CD8-positive, alpha-beta memory T cell (primary cell): ENCODE measurements at regions of chr17 and their contacts with region 1.

Region 1: GRCh38 chr17:4733073-4733531 is 1.9 kb downstream of the MED11 start:
- DNase-seq: no peak
- H3K4me3 ChIP-seq: no peak overlapping the region
- H3K4me3 Mint-ChIP-seq: peak overlapping the region in 4 of 7 donors; percentile 47 to 99 (median 80)
- H3K27ac ChIP-seq: no peak overlapping the region
- H3K27ac Mint-ChIP-seq: peak overlapping the region in 2 of 8 donors; percentile 68 to 71
- H3K4me1 ChIP-seq: peaks cover 1% of the 10 kb centered on the region
- H3K4me1 Mint-ChIP-seq: peaks cover 22 to 31% (median 27%) of the 10 kb centered on the region in 3 donors
- H3K27me3 ChIP-seq: no peaks in the 10 kb centered on the region
- H3K27me3 Mint-ChIP-seq: peaks cover 0 to 1% of the 10 kb centered on the region in 2 donors

Region 2: DNA sequence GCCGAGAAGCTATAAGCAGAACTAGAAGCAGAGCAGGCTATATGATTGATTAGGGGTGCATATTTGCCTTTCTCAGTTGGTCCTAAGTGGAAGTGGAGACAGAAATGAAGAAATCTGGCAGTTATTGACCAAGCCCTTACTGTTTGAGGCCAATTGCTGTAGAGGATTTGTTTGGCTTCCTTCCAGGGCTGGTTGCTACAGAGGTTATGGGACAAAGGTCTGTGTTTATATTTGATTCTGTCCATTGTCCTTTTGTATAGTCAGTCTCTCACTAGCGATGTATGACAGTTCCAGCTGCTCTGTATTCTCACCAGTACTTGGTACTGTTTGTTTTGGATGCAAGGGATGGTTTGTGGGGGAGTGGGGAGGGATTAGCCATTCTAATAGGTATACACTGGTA is 84.4 kb before region 1 on chr17:
- CTCF ChIA-PET with region 1: no interaction called
- POLR2A ChIA-PET with region 1: no interaction called
- DNase-seq: no peak
- H3K4me3 ChIP-seq: no peak overlapping the region
- H3K4me3 Mint-ChIP-seq: no peak overlapping the region
- H3K27ac ChIP-seq: no peak overlapping the region
- H3K27ac Mint-ChIP-seq: no peak overlapping the region
- H3K4me1 ChIP-seq: no peaks in the 10 kb centered on the region
- H3K4me1 Mint-ChIP-seq: no peaks in the 10 kb centered on the region
- H3K27me3 ChIP-seq: peaks cover 5% of the 10 kb centered on the region
- H3K27me3 Mint-ChIP-seq: peaks cover 31 to 52% of the 10 kb centered on the region in 2 donors

Region 3: GRCh38 chr17:4782652-4783051 is 49.5 kb after region 1 on chr17:
- CTCF ChIA-PET with region 1: no interaction called
- POLR2A ChIA-PET with region 1: interaction called, 11 read pairs
- DNase-seq: no peak
- H3K4me3 ChIP-seq: no peak overlapping the region
- H3K4me3 Mint-ChIP-seq: no peak overlapping the region
- H3K27ac ChIP-seq: no peak overlapping the region
- H3K27ac Mint-ChIP-seq: no peak overlapping the region
- H3K4me1 ChIP-seq: peaks cover 12% of the 10 kb centered on the region
- H3K4me1 Mint-ChIP-seq: peaks cover 10 to 22% (median 15%) of the 10 kb centered on the region in 3 donors
- H3K27me3 ChIP-seq: peaks cover 23% of the 10 kb centered on the region
- H3K27me3 Mint-ChIP-seq: peaks cover 48 to 65% of the 10 kb centered on the region in 2 donors

Region 4: GRCh38 chr17:4881761-4882555 is 148.9 kb after region 1 on chr17:
- CTCF ChIA-PET with region 1: interaction called, 14 read pairs
- POLR2A ChIA-PET with region 1: no interaction called
- DNase-seq: peak; percentile 42 to 78 (median 45)
- H3K4me3 ChIP-seq: no peak overlapping the region
- H3K4me3 Mint-ChIP-seq: no peak overlapping the region
- H3K27ac ChIP-seq: no peak overlapping the region
- H3K27ac Mint-ChIP-seq: peak overlapping the region in 4 of 8 donors; percentile 12 to 75 (median 64)
- H3K4me1 ChIP-seq: no peaks in the 10 kb centered on the region
- H3K4me1 Mint-ChIP-seq: peaks cover 0 to 2% (median 0%) of the 10 kb centered on the region in 3 donors
- H3K27me3 ChIP-seq: no peaks in the 10 kb centered on the region
- H3K27me3 Mint-ChIP-seq: no peaks in the 10 kb centered on the region